Breast epithelium (tissue), 4 donors: ENCODE measurements at regions of chr1 and their contacts with region 1.

Region 1: DNA sequence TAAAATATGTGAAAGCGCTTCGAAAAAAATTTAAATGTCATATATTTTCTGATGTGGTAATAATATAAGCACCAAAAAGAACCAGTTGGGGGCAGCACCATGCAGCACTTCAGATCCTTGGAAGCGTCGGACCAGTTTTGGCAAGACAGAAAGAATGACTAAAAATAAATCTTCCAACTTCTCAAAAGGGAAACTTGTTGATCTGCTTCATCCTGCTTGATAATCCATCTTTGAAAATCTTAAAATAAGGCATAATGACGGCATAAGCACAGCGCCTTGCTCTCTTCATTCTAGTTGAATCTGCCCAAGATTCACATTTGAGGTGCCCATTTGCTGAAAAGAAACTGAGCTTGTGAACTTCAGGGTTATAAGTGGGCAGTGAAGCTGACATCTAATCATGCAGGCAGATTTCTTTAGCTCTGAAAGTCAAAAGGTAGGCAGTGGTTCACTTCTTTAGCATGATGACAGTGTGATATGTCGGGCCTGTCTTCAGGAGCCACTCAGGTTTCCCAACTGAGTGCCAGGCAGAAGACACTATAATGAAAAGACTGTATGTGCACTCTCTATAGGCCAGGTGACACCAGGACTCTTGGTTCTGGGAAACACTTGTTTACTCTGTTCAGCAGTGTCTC is 19.8 kb upstream of the MUTYH start:
- DNase-seq: peak in 1 of 2 donors; percentile 69
- H3K4me3 ChIP-seq: peak overlapping the region in 1 of 3 donors; percentile 1
- H3K27ac ChIP-seq: peak overlapping the region; percentile 59 to 80
- H3K4me1 ChIP-seq: peaks cover 0 to 11% of the 10 kb centered on the region in 2 donors
- H3K27me3 ChIP-seq: no peaks in the 10 kb centered on the region
- CTCF ChIP-seq: peak in 2 of 3 donors; percentile 72 to 74
- POLR2A ChIP-seq: no peak

Region 2: GRCh38 chr1:44919400-44919799 is 440.6 kb before region 1 on chr1:
- intact Hi-C with region 1: no loop called
- DNase-seq: no peak
- H3K4me3 ChIP-seq: no peak overlapping the region
- H3K27ac ChIP-seq: no peak overlapping the region
- H3K4me1 ChIP-seq: no peaks in the 10 kb centered on the region
- H3K27me3 ChIP-seq: no peaks in the 10 kb centered on the region
- CTCF ChIP-seq: no peak
- POLR2A ChIP-seq: no peak

Region 3: DNA sequence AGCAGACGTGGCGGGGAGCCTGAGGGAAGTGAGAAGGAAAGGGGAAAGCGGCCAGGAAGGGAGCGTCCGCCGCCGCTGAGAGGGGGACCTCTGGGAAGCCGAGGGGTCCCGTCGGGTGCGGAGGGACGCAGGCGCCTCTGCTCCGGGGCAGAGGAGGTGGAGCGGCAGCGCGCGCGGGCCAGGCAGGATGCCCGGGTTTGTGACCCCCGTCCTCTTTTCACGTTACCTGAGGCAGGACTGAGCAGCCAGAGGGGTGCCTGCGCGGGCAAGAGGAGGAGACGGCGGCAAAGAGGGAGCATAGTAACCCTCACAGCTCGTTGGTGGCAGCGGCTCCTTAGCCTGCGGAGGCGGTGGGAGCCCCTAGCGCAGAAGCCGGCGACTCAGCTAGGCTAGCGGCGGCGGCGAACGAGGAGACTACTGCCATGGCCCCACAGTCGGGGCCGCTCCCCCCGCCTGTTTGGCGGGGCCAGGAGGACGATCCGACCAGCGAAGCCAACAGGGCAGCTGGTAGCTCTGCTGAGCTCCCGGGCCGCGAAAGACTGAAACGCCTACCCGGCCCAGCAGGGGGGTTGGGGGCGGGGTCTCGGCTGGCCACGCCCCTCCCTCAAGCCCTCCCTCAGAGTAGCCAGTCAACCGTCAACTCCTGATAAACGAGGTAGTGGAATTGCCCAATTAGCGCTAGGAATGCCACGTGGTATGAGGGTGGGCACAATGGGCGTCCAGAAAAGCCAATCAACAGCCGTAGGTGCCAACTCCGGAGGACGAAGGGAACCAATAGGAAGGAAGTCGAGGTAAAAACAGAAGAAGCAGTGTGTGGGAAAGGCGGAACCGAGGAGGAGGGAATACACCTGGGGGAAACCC is 130.9 kb after region 1 on chr1 and contains the start of gene TESK2:
- intact Hi-C with region 1: loop called (anchors 10 kb)
- DNase-seq: peak; percentile 97 to 100
- H3K4me3 ChIP-seq: peak within 1 kb of the TSS; percentile 84 to 99 (median 91)
- H3K27ac ChIP-seq: peak within 1 kb of the TSS; percentile 73 to 87
- H3K4me1 ChIP-seq: no peaks in the 10 kb centered on the region
- H3K27me3 ChIP-seq: no peaks in the 10 kb centered on the region
- CTCF ChIP-seq: peak; percentile 37 to 57 (median 43)
- POLR2A ChIP-seq: peak; percentile 50
- total RNA-seq, gene TESK2: 6.2 to 19.2 (median 11.1) TPM